Panc1 (cell line): ENCODE measurements at regions of chr5 and their contacts with region 1.

Region 1: DNA sequence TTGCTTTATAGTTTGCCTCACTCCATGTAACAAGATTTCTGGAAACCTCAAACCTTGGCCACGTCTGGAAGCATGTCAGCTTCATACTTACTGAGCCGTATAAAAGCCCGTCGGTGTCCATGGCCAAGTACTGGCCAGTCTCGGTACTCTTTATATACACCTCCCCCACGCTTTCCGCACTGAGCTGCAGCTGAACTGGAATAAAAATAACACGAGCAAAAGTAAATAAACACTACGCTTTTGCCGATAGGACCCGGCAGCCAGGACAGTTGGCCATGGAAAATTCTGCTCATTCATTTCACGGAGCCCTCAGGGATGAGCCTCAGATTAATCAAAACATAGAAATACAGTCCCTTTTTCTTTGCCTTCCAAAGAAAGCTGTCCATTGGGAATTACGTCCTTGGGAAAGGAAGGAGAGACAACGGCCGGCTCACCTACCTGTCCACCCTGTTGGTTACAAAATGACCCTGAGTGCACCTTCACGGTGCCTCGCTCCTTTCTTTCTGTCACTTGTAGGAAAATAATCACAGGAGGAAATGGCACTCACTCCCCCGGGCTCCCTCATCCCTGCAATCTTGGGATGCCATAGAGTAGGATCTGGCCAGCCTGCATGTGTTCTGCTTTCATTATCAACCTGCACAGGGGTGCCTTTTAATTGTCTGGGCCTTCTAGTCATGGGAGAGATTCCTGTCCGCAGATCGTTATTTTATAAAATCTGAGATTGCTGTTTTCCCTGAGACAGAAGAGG is 85.1 kb downstream of the FGF1 start:
- DNase-seq: no peak
- ATAC-seq: peak; percentile 77
- H3K4me3 ChIP-seq: peak overlapping the region; percentile 21 to 55
- H3K27ac ChIP-seq: peak overlapping the region; percentile 64
- H3K4me1 ChIP-seq: peaks cover 41% of the 10 kb centered on the region
- H3K27me3 ChIP-seq: no peaks in the 10 kb centered on the region
- CTCF ChIP-seq: no peak

Region 2: DNA sequence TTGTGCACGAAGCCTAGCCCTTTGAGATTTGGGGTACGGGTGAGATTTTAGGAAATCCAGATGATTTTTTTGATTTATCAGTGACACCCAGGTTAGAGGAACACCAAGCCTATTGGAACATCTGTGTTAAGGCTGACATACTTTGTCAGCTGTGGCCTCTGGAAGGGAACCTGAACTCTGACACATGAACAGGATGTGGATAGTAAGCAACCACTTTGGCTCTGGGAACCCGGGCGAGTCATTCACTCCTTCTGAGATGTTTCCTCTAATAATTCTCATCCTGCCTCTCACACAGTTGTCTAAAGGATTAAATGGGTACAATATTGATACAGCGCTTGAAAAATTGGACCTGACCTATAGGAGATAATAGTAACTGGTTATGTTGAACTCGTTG is 17.3 kb after region 1 on chr5:
- CTCF ChIA-PET with region 1: no interaction called
- POLR2A ChIA-PET with region 1: interaction called, 17 read pairs
- in situ Hi-C with region 1: no loop called
- intact Hi-C with region 1: no loop called
- DNase-seq: no peak
- ATAC-seq: no peak
- H3K4me3 ChIP-seq: no peak overlapping the region
- H3K27ac ChIP-seq: no peak overlapping the region
- H3K4me1 ChIP-seq: no peaks in the 10 kb centered on the region
- H3K27me3 ChIP-seq: no peaks in the 10 kb centered on the region
- CTCF ChIP-seq: no peak

Region 3: DNA sequence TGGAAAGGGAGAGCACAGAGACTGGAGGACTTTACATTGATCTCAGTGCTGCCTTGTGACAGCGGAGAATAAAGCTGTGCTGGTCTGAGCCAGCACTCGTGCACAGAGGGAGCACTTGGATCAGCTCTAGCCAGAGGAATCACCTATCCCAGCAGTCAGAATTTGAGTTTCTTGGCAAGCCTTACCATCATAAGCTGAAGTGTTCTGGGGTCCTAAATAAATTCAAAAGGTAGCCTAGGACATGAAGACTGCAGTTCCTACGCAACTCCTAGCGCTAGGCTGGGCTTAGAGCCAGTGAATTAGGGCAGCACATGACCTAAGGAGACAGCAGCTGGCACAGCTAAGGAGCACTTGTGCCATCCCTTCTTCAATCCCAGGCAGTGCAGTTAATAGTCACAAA is 1330.7 kb after region 1 on chr5:
- CTCF ChIA-PET with region 1: no interaction called
- POLR2A ChIA-PET with region 1: no interaction called
- in situ Hi-C with region 1: no loop called
- intact Hi-C with region 1: no loop called
- DNase-seq: no peak
- ATAC-seq: no peak
- H3K4me3 ChIP-seq: no peak overlapping the region
- H3K27ac ChIP-seq: no peak overlapping the region
- H3K4me1 ChIP-seq: no peaks in the 10 kb centered on the region
- H3K27me3 ChIP-seq: no peaks in the 10 kb centered on the region
- CTCF ChIP-seq: no peak